ENCODE measurements at regions of chr14 and their contacts with region 1.

Region 1: DNA sequence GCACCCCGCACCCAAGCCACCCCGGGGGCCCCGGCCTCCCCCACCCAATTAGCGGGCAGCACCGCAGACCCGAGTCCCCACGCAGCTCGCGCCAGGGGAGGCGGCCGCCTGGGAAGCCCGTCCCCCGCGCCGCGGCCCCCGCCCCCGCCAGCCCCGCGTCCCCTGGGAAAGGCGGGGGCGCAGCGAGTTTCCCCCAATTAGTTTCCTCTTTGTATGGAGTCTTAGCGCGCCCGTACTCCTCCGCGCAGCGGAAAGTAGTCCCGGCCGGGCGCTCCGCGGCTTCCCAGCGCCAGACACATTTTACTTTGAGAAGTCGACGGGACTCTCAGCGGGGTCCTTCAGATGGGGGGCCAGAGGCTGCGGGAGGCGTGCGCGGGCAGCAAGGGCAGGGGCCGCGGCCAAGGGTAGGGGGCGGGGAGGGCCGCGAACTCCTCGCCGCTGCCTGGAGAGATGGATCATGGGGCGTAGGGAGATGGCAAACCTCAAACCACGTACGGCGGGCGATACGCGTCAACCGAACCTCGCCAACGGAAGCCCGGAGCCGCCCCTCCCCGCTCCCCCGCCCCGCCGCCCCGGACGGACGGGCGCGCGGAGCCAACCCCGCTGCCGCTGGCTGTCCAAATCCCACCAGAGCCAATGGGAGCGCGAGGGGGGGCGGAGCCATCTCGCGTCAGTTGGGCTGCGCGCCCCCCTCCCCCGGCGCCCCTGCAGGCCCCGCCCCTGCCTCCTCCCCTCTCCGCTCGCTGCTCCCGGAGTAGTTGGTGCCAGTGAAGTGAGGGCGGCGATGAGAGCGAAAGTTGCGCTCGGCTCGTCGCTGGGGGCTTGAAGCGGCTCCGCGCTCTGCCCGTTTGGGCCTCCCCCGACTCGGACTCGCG is at the start of gene RCOR1:
- DNase-seq: peak; percentile 98
- ATAC-seq: peak; percentile 90
- H3K4me3 Mint-ChIP-seq: peak within 1 kb of the TSS; percentile 92
- H3K27ac Mint-ChIP-seq: peak within 1 kb of the TSS; percentile 94
- H3K4me1 Mint-ChIP-seq: peaks cover 27% of the 10 kb centered on the region
- H3K27me3 Mint-ChIP-seq: no peaks in the 10 kb centered on the region
- total RNA-seq, gene RCOR1: 22.4 to 24.7 TPM

Region 2: GRCh38 chr14:102524466-102525218 is 67.5 kb before region 1 on chr14:
- CTCF ChIA-PET with region 1: interaction called, 40 read pairs
- POLR2A ChIA-PET with region 1: interaction called, 6 read pairs
- DNase-seq: peak; percentile 98
- ATAC-seq: peak; percentile 99
- H3K4me3 Mint-ChIP-seq: peak overlapping the region; percentile 84
- H3K27ac Mint-ChIP-seq: peak overlapping the region; percentile 95
- H3K4me1 Mint-ChIP-seq: peaks cover 33% of the 10 kb centered on the region
- H3K27me3 Mint-ChIP-seq: no peaks in the 10 kb centered on the region

Region 3: DNA sequence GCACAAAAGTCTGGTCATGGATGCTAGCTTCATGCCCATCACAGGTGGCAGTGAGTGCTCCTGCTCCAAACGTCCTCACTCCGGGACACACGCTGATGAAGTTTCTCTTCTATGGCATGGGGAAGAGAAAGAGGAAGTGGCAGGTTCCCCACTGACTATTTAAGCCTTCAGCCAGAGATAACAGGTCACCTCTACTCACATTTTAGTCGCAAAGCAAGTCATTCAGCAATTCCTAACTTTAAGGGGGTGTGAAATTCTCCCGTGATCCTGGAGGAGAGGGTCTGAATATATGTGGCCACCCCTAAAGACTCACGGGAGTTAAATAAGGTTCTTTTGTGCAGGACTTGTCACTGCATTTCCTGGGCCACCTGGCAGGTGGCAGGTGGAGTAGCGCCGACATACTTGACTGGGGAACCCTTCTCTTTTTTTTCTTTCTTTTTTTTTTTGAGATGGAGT is 18.5 kb before region 1 on chr14:
- CTCF ChIA-PET with region 1: interaction called, 13 read pairs
- POLR2A ChIA-PET with region 1: interaction called, 8 read pairs
- DNase-seq: no peak
- ATAC-seq: no peak
- H3K4me3 Mint-ChIP-seq: no peak overlapping the region
- H3K27ac Mint-ChIP-seq: no peak overlapping the region
- H3K4me1 Mint-ChIP-seq: peaks cover 21% of the 10 kb centered on the region
- H3K27me3 Mint-ChIP-seq: peaks cover 2% of the 10 kb centered on the region

Region 4: DNA sequence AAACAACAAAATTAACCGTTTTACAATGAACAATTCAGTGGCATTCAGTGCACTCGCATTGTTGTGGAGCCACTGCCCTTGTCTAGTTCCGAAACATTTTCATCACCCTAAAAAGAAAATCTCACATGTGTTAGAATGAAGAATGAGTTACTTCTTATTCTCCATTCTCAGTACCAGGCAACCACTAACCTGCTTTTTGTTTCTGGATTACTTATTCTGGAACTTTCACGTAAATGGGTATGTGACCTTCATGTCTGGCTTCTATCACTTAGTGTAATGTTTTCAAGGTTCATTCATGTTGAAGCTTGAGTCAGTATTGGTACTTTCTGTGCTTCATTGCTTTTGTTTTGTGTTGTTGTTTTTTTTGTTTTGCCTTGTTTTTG is 15.9 kb after region 1 on chr14:
- CTCF ChIA-PET with region 1: interaction called, 18 read pairs
- POLR2A ChIA-PET with region 1: no interaction called
- DNase-seq: no peak
- ATAC-seq: no peak
- H3K4me3 Mint-ChIP-seq: no peak overlapping the region
- H3K27ac Mint-ChIP-seq: no peak overlapping the region
- H3K4me1 Mint-ChIP-seq: peaks cover 13% of the 10 kb centered on the region
- H3K27me3 Mint-ChIP-seq: no peaks in the 10 kb centered on the region

Region 5: GRCh38 chr14:102620413-102620812 is 28.3 kb after region 1 on chr14:
- CTCF ChIA-PET with region 1: interaction called, 11 read pairs
- POLR2A ChIA-PET with region 1: no interaction called
- DNase-seq: no peak
- ATAC-seq: no peak
- H3K4me3 Mint-ChIP-seq: no peak overlapping the region
- H3K27ac Mint-ChIP-seq: no peak overlapping the region
- H3K4me1 Mint-ChIP-seq: peaks cover 18% of the 10 kb centered on the region
- H3K27me3 Mint-ChIP-seq: no peaks in the 10 kb centered on the region

Region 6: DNA sequence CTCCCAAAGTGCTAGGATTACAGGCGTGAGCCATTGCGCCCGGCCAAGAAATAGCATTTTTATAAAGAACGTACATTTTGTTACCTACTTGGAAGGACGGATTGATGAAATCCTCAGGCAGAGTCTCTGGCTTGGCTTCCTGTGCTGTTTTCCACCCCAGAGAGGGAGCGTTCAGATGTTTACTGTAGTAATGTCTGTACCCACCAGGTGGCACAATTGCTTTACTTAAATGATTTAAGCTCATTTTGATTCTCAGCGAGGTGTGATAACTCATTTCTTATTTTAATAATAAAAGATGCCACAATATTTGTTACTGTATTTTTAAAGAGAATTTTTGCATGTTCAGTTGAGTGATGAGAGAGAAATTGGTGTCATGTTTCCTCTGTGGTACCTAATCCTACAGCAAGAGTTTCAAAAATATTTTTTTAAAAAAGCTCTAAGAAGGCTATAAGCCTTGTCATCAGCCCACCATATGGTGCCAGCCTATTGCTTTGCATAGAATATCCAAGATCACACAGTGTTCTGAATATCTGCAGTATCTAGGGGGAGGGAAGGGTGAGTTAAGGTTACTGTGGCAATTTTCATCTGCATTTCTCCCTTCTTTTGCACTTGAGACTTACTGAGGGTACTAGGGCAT is 102.5 kb after region 1 on chr14:
- CTCF ChIA-PET with region 1: interaction called, 24 read pairs
- POLR2A ChIA-PET with region 1: no interaction called
- DNase-seq: peak; percentile 77
- ATAC-seq: no peak
- H3K4me3 Mint-ChIP-seq: no peak overlapping the region
- H3K27ac Mint-ChIP-seq: no peak overlapping the region
- H3K4me1 Mint-ChIP-seq: peaks cover 14% of the 10 kb centered on the region
- H3K27me3 Mint-ChIP-seq: no peaks in the 10 kb centered on the region